ENCODE measurements at regions of chr16 and their contacts with region 1.

Region 1: GRCh38 chr16:29943846-29944669 is 17.8 kb upstream of the TMEM219 start:
- DNase-seq: peak; percentile 62 to 83 (median 75)
- ATAC-seq: peak; percentile 89
- H3K4me3 ChIP-seq: peak overlapping the region; percentile 7; the same call in 1 of the 2 replicates
- H3K27ac ChIP-seq: peak overlapping the region; percentile 86
- H3K4me1 ChIP-seq: peaks cover 18 to 36% of the 10 kb centered on the region in 2 experiments
- H3K27me3 ChIP-seq: no peaks in the 10 kb centered on the region
- CTCF ChIP-seq: peak; percentile 59 to 73 (median 71)
- EP300 ChIP-seq: no peak
- POLR2A ChIP-seq: no peak
- RAD21 ChIP-seq: no peak

Region 2: DNA sequence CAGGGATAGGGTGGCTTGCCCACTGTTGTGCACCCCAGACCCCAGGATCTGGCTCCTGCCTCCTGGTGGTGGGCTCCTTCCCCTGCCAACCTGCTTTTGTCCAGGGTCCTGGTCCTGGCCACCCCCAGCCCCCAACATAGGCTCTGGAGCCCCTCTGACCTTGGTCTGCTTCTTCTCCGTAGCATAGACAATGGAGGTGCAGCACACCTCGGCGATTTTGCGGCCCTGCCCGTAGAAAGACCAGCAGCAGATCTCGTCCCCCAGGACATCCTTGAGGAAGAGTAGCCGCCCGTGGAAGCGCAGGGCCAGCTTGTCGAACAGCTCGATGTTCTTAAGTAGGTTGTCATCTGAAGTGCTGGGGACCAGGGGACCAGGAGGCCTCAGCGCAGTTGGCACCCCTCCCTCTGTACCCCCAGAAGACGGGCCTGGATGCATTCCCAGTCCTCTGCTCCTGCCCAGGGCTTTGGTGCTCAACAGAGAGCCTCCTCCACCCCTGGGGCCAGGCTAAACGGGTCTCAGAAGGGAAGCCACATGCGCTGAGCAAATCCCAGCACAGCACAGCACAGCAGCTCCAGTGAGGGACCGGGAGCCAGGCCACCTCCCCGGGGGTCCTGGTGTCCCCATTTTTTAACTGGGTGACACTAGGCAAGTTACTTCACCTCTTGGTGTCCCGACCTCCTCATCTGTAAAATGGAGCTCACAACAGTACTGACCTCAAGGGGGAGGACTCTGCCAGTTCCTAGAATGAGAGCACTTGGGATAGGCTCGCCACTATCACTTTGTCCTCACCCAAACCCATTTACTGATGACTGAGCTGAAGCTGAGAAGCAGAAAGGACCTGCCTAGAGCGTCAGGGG is 33.0 kb before region 1 on chr16:
- CTCF ChIA-PET with region 1: no interaction called
- POLR2A ChIA-PET with region 1: no interaction called
- in situ Hi-C with region 1: no loop called
- intact Hi-C with region 1: no loop called
- DNase-seq: peak in 1 of 4 experiments; percentile 28
- ATAC-seq: peak; percentile 69
- H3K4me3 ChIP-seq: no peak overlapping the region
- H3K27ac ChIP-seq: no peak overlapping the region
- H3K4me1 ChIP-seq: peaks cover 0 to 16% of the 10 kb centered on the region in 2 experiments; a peak in 2 of 5 replicates
- H3K27me3 ChIP-seq: no peaks in the 10 kb centered on the region
- CTCF ChIP-seq: peak in 1 of 3 experiments; percentile 40; a peak in 2 of 6 replicates
- EP300 ChIP-seq: no peak
- POLR2A ChIP-seq: no peak
- RAD21 ChIP-seq: peak in 1 of 2 experiments; percentile 40; a peak in 2 of 4 replicates

Region 3: DNA sequence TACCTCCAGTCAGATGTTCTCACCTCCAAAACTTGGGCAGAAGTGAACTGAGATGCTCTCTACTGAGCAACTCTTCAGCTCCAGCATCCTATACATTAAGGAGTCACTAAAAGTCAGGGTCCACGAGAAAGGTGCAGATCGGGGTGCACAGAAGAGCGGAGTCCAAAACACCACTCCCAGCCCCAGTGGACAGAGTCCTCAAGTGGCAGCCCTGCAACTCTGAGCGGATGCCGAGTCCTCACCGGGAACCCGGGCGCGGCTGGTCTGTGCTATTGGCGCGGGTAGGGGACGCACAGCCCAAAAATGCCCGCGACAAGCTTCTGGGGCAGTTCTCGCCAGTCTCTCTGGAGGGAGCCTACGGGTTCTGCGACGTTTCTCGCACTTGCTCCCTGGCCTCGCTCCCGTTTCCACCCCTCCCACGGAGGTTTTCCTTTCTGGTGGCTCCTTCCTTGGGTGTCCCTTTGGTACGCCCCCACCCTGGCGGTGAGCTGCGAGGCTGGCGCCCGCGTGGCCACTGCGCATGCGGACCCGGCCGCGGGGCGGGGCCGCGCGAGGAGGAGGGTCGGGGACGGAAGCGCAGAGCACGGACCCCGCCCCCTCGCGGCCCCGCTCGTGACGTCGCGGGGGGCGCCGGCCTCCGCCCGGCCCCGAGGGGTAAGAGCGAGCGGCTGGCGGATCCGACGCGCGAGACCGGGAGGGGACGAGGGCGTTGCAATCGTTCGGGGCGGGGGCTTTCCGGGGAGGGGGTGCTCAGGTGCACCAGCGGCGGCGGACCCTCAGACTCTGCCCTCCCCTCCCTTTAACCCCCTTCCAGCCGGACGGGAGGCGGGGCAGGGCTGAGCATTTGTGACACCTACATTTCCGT is 17.7 kb after region 1 on chr16 and contains the start of gene TMEM219:
- CTCF ChIA-PET with region 1: no interaction called
- POLR2A ChIA-PET with region 1: interaction called, 17 read pairs
- in situ Hi-C with region 1: no loop called
- intact Hi-C with region 1: no loop called
- DNase-seq: peak; percentile 94 to 99 (median 98)
- ATAC-seq: peak; percentile 98
- H3K4me3 ChIP-seq: peak within 1 kb of the TSS; percentile 69
- H3K27ac ChIP-seq: peak within 1 kb of the TSS; percentile 85
- H3K4me1 ChIP-seq: peaks cover 12 to 20% of the 10 kb centered on the region in 2 experiments; a peak in 4 of 5 replicates
- H3K27me3 ChIP-seq: no peaks in the 10 kb centered on the region
- CTCF ChIP-seq: peak; percentile 16 to 39 (median 33); a peak in 4 of 6 replicates
- EP300 ChIP-seq: no peak
- POLR2A ChIP-seq: peak; percentile 78
- RAD21 ChIP-seq: peak in 1 of 2 experiments; percentile 20; a peak in 2 of 4 replicates
- polyA plus RNA-seq, gene TMEM219: 49.4 to 57.1 TPM

Measured in K562 (cell line).